Activated naive CD4-positive, alpha-beta T cell treated with anti-CD3 and anti-CD28 coated beads, Interleukin-2, amount 10 ng/mL, durations not matched to agents 7 days and 5 days (primary cell): ENCODE measurements at regions of chr2 and their contacts with region 1.

Region 1: GRCh38 chr2:97663965-97664635 is at the start of gene ACTR1B:
- DNase-seq: peak; percentile 98
- H3K4me3 Mint-ChIP-seq: peak within 1 kb of the TSS; percentile 93
- H3K27ac Mint-ChIP-seq: peak within 1 kb of the TSS; percentile 98
- H3K4me1 Mint-ChIP-seq: peaks cover 36% of the 10 kb centered on the region
- H3K27me3 Mint-ChIP-seq: no peaks in the 10 kb centered on the region

Region 2: DNA sequence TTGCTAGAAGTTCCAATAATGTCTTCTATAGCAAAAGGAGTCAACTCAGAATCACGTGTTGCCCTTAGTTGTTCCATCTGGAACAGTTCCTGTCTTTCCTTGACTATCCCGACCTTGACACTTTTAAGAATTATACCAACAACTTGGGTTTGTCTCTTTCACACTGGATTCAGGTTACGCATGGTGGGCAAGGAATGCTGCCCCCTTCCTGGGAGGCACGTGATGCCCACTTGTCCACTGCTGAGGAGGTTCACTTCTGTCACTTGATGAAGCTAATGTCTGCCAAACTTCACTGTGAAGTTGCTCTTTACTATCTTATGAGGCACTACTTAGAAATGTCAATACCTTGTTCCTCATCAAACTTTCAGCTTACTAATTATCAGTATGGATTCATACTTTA is 13.0 kb before region 1 on chr2:
- CTCF ChIA-PET with region 1: interaction called, 11 read pairs
- DNase-seq: no peak
- H3K4me3 Mint-ChIP-seq: no peak overlapping the region
- H3K27ac Mint-ChIP-seq: no peak overlapping the region
- H3K4me1 Mint-ChIP-seq: peaks cover 12% of the 10 kb centered on the region
- H3K27me3 Mint-ChIP-seq: no peaks in the 10 kb centered on the region

Region 3: DNA sequence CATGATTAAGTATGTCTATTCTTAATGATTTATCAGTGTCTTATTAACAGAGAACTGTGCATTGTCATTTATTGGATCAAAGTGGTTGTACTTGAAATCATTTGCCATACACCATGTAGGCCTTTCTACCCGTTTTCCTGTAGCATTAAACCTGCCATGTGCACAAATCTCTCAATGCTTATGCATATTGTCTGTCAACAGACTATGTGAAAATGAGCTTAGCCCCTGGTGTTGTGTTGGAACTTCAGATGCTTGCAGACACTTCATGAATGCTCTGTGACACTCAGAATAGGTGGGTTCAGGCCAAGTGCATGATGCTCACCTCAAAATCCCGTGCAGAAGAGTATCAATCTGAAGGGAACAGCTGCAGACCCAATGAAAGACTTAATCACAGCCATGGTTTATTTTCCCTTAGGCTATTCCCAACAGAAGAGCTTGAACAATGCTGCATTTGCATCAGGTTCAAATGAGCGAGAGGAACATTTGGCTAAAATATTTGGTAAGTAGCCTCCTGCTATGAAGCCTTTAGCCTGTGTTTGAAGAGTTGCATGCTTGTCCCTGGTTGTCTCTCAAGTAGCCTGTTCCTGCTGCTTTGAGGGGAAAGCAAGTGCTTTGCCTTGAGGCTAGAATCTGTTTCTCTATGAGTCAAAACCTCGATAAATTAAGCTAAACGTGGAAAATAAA is 11.5 kb after region 1 on chr2:
- CTCF ChIA-PET with region 1: interaction called, 11 read pairs
- DNase-seq: no peak
- H3K4me3 Mint-ChIP-seq: no peak overlapping the region
- H3K27ac Mint-ChIP-seq: no peak overlapping the region
- H3K4me1 Mint-ChIP-seq: peaks cover 10% of the 10 kb centered on the region
- H3K27me3 Mint-ChIP-seq: peaks cover 6% of the 10 kb centered on the region

Region 4: DNA sequence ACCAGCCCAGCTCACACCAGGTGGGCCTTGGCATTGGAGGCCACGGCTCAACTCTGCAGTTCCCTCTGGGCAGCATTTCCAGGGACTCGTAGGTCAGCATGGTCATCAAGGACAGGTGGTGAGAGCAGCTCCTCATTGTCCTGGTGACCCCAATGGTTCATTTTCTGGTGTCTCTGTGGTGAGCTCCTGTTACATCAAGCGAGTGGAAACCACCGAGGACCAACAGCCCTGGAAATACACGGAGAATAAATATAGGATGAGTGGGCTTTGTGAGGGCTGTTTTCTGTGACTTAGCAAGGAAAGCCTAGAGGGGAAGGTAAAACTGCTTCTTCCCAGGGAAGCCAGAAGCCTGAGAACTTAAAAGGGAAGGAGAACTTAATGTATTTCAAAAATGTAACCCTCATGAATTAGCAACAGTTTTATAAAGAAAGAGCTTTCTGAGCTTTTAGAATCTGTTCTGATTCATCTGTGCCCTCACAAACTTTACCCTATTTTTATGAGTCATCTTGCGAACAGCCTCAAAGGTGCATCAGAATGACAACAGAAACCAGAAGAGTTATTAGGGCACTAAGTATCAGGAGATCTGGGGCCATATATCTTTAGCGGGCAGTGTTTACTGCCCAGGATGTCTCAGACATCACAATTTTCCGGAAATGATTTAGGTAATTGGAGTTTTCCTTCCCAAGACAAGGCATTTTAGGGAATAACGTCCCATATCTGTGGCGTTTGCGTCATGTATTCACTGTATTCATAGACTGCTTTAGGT is 24.1 kb after region 1 on chr2:
- CTCF ChIA-PET with region 1: interaction called, 12 read pairs
- DNase-seq: no peak
- H3K4me3 Mint-ChIP-seq: no peak overlapping the region
- H3K27ac Mint-ChIP-seq: no peak overlapping the region
- H3K4me1 Mint-ChIP-seq: peaks cover 13% of the 10 kb centered on the region
- H3K27me3 Mint-ChIP-seq: no peaks in the 10 kb centered on the region